ENCODE measurements at regions of chr9 and their contacts with region 1.

Region 1: DNA sequence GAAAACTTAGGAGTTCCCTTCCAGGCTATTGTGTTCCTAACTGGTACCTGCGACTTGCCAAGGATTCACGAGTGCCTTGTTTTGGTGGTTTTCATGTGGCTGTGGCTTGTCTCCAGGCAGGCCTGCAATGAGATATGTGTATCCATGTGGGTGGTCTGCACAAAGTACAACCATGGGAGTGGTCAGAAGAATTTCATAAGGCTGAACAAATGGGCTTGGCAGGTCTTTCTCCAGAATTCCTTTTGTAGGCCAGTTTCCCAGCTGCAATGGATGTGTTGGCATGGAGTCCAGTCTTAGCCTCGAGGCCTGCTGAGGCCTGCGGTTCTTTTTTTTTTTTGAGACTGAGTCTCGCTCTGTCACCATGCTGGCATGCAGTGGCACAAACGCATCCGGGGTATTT is 28.8 kb upstream of the MELK start:
- DNase-seq: peak in 1 of 5 donors; percentile 8
- H3K4me3 ChIP-seq: no peak overlapping the region
- H3K27ac ChIP-seq: no peak overlapping the region
- H3K4me1 ChIP-seq: peaks cover 1% of the 10 kb centered on the region
- H3K27me3 ChIP-seq: no peaks in the 10 kb centered on the region
- CTCF ChIP-seq: no peak
- EP300 ChIP-seq: no peak
- POLR2A ChIP-seq: no peak

Region 2: GRCh38 chr9:36415822-36416515 is 127.9 kb before region 1 on chr9:
- intact Hi-C with region 1: loop called in 1 of 4 experiments (anchors 5 kb)
- DNase-seq: no peak
- H3K4me3 ChIP-seq: no peak overlapping the region
- H3K27ac ChIP-seq: no peak overlapping the region
- H3K4me1 ChIP-seq: peaks cover 2% of the 10 kb centered on the region
- H3K27me3 ChIP-seq: no peaks in the 10 kb centered on the region
- CTCF ChIP-seq: no peak
- EP300 ChIP-seq: no peak
- POLR2A ChIP-seq: no peak

Region 3: DNA sequence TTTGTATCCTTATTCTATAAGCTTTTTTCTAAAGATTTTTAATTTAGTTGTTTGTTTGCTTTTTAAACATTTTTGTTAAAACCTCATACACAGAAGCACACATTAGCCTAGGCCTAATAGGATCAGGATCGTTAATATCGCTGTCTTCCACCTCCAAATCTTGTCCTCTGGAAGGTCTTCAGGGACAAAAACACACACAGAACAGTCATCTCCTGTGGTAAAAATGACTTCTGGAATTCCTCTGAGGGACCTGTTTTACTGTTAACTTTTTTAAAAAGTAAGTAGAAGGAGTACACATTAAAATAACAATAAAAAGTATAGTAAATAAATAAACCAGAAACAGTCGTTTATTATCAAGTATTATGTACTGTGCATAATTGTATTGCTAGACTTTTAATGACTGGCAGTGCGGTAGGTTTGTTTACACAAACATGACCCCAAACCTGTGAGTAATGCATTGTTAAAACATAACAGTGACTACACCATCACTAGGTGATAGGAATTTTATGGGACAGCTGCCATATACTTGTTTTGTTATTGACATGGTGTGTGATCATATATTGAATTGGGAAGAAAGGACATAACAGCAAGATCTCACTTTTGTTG is 686.1 kb after region 1 on chr9:
- intact Hi-C with region 1: no loop called
- DNase-seq: no peak
- H3K4me3 ChIP-seq: no peak overlapping the region
- H3K27ac ChIP-seq: no peak overlapping the region
- H3K4me1 ChIP-seq: no peaks in the 10 kb centered on the region
- H3K27me3 ChIP-seq: no peaks in the 10 kb centered on the region
- CTCF ChIP-seq: no peak
- EP300 ChIP-seq: no peak
- POLR2A ChIP-seq: no peak

Measured in ovary (tissue), 10 donors.